ENCODE measurements at regions of chr19 and their contacts with region 1.

Region 1: DNA sequence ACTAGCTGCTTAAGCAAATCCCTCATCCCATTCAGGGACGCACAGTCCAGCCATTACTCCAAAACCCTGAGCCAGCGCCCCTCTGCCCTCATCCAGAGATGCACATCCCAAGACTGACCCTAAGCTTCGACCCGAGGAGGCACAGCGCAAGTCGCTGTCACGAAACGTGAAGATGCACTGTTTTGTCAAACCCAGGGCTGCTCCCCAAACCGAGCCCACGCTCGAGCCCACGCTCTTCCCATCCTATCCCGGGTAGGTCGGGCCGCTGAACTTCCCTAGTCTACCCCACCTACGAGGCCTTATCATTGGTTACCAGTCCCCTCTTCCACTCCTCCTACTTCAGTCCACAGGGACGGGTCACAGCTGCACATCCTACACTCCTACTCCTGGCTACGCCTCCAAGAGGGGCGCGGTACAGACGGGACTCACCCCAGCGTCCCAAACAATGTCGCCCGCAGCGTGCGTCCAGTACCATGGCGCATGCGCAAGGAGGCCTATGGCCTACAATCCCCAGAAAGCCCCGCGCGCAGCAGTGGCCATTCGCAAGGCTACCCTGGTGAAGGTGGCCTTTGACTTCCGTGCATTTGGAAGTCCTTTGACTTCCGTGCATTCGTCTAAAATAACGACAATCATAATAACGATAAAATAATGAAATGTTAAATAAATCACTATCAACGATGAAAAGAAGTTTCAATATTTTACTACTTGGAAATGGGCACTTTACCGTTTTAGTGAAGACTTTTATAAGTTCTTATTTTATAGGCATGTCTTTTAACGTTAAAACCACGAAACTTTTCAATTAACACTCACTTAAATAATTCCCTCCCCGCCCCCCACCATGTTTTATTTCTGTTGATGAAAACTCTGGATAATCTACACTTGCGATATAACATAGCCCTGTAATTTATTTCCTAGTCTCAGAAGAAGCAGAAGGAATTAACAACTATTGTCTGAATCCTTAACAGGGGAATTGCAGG is at the start of gene ZNF285:
- DNase-seq: peak; percentile 91
- ATAC-seq: peak; percentile 99
- H3K4me3 Mint-ChIP-seq: peak within 1 kb of the TSS; percentile 75
- H3K27ac Mint-ChIP-seq: peak within 1 kb of the TSS; percentile 76
- H3K4me1 Mint-ChIP-seq: peaks cover 10% of the 10 kb centered on the region
- H3K27me3 Mint-ChIP-seq: no peaks in the 10 kb centered on the region
- total RNA-seq, gene ZNF285: 1.2 to 1.4 TPM

Region 2: GRCh38 chr19:44207126-44207803 is 194.2 kb before region 1 on chr19:
- CTCF ChIA-PET with region 1: no interaction called
- POLR2A ChIA-PET with region 1: no interaction called
- intact Hi-C with region 1: loop called in 1 of 2 experiments (anchors 1 kb)
- DNase-seq: peak; percentile 84
- ATAC-seq: peak; percentile 93
- H3K4me3 Mint-ChIP-seq: peak overlapping the region; percentile 80
- H3K27ac Mint-ChIP-seq: peak overlapping the region; percentile 73
- H3K4me1 Mint-ChIP-seq: peaks cover 4% of the 10 kb centered on the region
- H3K27me3 Mint-ChIP-seq: peaks cover 2% of the 10 kb centered on the region

Region 3: DNA sequence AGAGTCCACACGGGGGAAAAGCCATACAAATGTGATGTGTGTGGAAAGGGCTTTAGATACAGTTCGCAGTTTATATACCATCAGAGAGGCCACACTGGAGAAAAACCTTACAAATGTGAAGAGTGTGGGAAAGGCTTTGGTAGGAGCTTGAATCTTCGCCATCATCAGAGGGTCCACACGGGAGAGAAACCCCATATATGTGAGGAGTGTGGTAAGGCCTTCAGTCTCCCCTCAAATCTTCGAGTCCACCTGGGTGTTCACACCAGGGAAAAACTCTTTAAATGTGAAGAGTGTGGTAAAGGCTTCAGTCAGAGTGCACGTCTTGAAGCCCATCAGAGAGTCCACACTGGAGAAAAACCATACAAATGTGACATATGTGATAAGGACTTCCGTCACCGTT is 165.0 kb before region 1 on chr19:
- CTCF ChIA-PET with region 1: no interaction called
- POLR2A ChIA-PET with region 1: no interaction called
- intact Hi-C with region 1: no loop called
- DNase-seq: no peak
- ATAC-seq: no peak
- H3K4me3 Mint-ChIP-seq: no peak overlapping the region
- H3K27ac Mint-ChIP-seq: no peak overlapping the region
- H3K4me1 Mint-ChIP-seq: no peaks in the 10 kb centered on the region
- H3K27me3 Mint-ChIP-seq: no peaks in the 10 kb centered on the region

Region 4: GRCh38 chr19:44447916-44448674 is 46.7 kb after region 1 on chr19 and contains the start of gene ZNF229:
- CTCF ChIA-PET with region 1: no interaction called
- POLR2A ChIA-PET with region 1: no interaction called
- intact Hi-C with region 1: loop called in 1 of 2 experiments (anchors 1 kb)
- DNase-seq: peak; percentile 91
- ATAC-seq: peak; percentile 98
- H3K4me3 Mint-ChIP-seq: peak within 1 kb of the TSS; percentile 81
- H3K27ac Mint-ChIP-seq: peak within 1 kb of the TSS; percentile 84
- H3K4me1 Mint-ChIP-seq: peaks cover 10% of the 10 kb centered on the region
- H3K27me3 Mint-ChIP-seq: peaks cover 2% of the 10 kb centered on the region
- total RNA-seq, gene ZNF229: 1.0 to 1.2 TPM

Region 5: DNA sequence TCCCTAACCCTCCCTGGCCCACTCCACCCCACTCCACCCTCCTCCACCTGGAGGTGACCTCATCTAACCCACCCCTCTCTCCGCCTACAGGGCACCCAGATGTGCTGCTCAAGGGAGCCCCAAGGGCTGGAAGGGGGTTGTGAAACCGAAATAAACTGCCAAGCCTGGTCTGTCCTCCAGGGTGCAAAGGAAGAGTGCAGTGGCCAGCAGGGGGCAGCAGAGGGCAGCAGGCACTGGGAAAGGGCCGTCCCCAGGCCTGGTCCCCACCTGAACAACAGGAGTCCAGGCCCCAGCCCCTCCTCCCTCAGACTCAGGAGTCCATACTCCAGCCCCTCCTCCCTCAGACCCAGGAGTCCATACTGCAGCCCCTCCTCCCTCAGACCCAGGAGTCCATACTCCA is 399.0 kb after region 1 on chr19:
- CTCF ChIA-PET with region 1: no interaction called
- POLR2A ChIA-PET with region 1: no interaction called
- intact Hi-C with region 1: no loop called
- DNase-seq: peak; percentile 92
- ATAC-seq: peak; percentile 98
- H3K4me3 Mint-ChIP-seq: no peak overlapping the region
- H3K27ac Mint-ChIP-seq: no peak overlapping the region
- H3K4me1 Mint-ChIP-seq: peaks cover 11% of the 10 kb centered on the region
- H3K27me3 Mint-ChIP-seq: no peaks in the 10 kb centered on the region

Measured in activated CD4-positive, alpha-beta T cell treated with anti-CD3 and anti-CD28 coated beads for 36 hours (primary cell).